Naive thymus-derived CD4-positive, alpha-beta T cell (primary cell): ENCODE measurements at regions of chr10 and their contacts with region 1.

Region 1: DNA sequence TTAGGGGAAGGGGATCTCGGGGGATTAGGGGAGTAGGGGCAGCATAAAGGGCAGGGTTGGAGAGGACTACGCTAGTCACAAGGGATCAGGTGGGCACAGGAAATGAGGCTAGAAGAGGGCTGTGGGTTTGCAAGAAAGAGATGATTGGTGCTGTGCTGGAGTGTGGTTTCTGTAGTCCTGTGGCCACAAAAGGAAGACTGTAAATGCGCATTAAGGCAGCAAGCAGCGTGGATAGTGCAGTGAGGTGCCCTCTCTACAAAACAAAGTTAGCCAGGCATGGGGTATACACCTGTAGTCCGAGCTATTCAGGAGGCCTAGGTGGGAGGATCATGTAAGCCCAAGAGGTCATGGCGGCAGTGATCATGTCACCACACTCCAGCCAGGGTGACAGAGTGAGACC is 212.1 kb downstream of the MLLT10 start:
- DNase-seq: peak in 3 of 9 donors; percentile 19 to 37 (median 36)
- ATAC-seq: peak; percentile 72
- H3K4me3 ChIP-seq: no peak overlapping the region
- H3K4me3 Mint-ChIP-seq: peak overlapping the region in 9 of 10 donors; percentile 23 to 70 (median 53)
- H3K27ac ChIP-seq: peak overlapping the region; percentile 18
- H3K27ac Mint-ChIP-seq: peak overlapping the region; percentile 73 to 95 (median 90)
- H3K4me1 ChIP-seq: peaks cover 7 to 19% of the 10 kb centered on the region in 2 donors
- H3K4me1 Mint-ChIP-seq: peaks cover 8 to 44% (median 28%) of the 10 kb centered on the region in 7 donors
- H3K27me3 ChIP-seq: no peaks in the 10 kb centered on the region
- H3K27me3 Mint-ChIP-seq: no peaks in the 10 kb centered on the region

Region 2: DNA sequence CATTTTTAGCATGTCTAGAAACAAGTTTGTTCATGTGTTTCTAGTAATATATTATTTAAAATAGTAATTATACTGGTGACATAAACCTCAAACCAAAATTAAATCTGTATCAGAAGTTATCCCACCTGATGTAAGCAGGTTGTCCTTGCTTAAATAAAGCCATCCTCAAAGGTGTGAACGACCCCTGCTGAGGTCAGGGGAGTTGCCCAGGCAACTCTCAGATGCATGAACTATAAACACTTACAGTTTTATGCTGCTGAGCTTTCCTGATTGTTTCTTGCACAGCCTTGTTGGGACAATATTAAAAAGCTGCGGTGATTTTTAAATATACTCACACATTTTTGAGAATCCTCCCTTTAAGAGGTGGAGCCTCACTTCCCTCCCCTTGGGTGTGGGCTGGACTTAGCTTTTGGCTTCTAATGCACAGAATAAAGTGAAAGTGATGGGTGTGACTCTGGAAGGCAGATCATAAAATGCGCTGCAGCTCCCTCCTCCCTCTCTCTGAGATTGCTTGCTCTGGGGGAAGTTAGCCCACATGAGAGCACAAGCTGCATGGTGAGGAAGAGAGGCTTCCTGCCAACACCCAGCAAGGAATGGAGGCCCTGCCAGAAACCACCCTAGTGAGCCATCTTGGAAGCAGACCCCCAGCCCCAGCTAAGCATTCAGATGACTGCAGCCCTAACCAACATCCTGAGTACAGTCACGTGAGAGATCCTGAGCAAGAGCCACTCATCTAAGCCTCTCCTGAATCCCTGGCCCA is 373.3 kb before region 1 on chr10:
- CTCF ChIA-PET with region 1: no interaction called
- POLR2A ChIA-PET with region 1: no interaction called
- intact Hi-C with region 1: no loop called
- DNase-seq: peak in 7 of 9 donors; percentile 31 to 70 (median 60)
- ATAC-seq: peak; percentile 94
- H3K4me3 ChIP-seq: peak overlapping the region; percentile 22
- H3K4me3 Mint-ChIP-seq: peak overlapping the region; percentile 46 to 78 (median 60)
- H3K27ac ChIP-seq: peak overlapping the region; percentile 9
- H3K27ac Mint-ChIP-seq: peak overlapping the region; percentile 44 to 93 (median 82)
- H3K4me1 ChIP-seq: peaks cover 0 to 3% of the 10 kb centered on the region in 2 donors
- H3K4me1 Mint-ChIP-seq: peaks cover 7 to 26% (median 14%) of the 10 kb centered on the region in 7 donors
- H3K27me3 ChIP-seq: no peaks in the 10 kb centered on the region
- H3K27me3 Mint-ChIP-seq: no peaks in the 10 kb centered on the region

Region 3: DNA sequence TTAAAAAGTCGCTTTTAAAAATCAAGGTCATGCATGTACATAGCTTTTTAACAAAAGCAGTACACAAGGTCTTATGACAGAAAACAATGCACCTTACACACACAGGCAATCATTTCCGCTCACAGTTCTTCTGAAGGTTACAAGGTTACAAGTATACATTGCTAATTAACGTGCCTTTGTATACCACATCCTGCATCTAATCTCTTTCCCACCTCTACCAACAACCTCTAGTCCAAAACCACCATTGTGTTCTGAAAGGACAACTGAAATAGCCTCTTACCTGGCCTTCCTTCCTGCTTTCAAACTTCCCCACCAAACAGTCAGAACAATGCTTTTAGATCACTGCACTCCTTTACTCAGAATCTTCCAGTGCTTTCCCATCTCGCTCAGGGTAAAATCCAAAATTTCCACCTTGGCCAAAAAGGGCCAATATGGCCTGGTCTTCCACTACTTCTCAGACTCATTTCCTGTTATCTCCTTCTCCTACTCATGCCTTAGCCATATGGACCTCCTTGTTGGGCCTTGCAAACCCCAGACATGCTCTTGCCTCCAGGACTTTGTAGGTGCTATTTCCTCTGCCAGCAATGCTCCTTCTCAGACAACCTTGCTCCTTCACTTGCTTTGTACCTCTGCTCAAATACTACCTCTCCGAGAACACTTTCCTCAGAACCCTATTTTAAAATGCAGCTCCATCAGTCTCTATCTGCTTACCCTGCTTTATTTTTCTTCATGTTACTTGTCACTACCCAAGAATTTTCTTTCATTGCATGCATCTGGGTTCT is 52.1 kb after region 1 on chr10:
- CTCF ChIA-PET with region 1: interaction called, 3 read pairs
- POLR2A ChIA-PET with region 1: no interaction called
- intact Hi-C with region 1: loop called in 1 of 2 experiments (anchors 10 kb)
- DNase-seq: peak in 6 of 9 donors; percentile 23 to 67 (median 54)
- ATAC-seq: peak; percentile 84
- H3K4me3 ChIP-seq: no peak overlapping the region
- H3K4me3 Mint-ChIP-seq: peak overlapping the region in 8 of 10 donors; percentile 18 to 82 (median 44)
- H3K27ac ChIP-seq: peak overlapping the region; percentile 33
- H3K27ac Mint-ChIP-seq: peak overlapping the region; percentile 58 to 95 (median 89)
- H3K4me1 ChIP-seq: peaks cover 8 to 23% of the 10 kb centered on the region in 2 donors
- H3K4me1 Mint-ChIP-seq: peaks cover 14 to 37% (median 35%) of the 10 kb centered on the region in 7 donors
- H3K27me3 ChIP-seq: no peaks in the 10 kb centered on the region
- H3K27me3 Mint-ChIP-seq: no peaks in the 10 kb centered on the region

Region 4: DNA sequence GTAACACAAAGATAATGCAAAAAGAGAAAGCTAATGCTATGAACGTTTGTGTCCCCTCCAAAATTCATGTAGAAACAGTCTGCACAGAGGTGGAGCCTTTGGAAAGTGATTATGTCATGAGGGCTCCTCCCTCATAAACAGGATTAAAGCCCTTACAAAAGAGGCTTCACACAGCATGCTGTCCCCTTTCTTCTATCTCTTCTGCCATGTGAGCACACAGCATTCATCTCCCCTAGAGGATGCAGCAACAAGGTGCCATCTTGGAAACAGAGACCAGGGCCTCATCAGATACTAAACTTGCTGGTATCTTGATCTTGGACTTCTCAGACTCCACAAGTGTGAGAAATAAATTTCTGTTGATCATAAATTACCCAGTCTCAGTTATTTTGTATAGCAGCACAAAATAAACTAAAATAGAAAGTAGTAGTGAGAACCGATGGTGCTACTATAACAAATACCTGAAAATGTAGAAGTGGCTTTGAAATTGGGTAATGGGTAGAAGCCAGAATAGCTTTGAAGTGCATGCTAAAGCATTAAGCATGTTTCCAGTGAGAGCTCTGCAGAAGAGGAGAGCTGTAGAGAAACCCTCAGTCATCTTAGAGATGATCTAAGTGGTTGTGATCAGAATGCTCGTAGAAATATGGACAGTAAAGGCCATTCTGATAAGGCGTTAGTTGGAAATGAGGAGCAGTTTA is 148.7 kb after region 1 on chr10:
- CTCF ChIA-PET with region 1: no interaction called
- POLR2A ChIA-PET with region 1: no interaction called
- intact Hi-C with region 1: no loop called
- DNase-seq: no peak
- ATAC-seq: no peak
- H3K4me3 ChIP-seq: no peak overlapping the region
- H3K4me3 Mint-ChIP-seq: no peak overlapping the region
- H3K27ac ChIP-seq: no peak overlapping the region
- H3K27ac Mint-ChIP-seq: peak overlapping the region in 1 of 9 donors; percentile 56
- H3K4me1 ChIP-seq: peaks cover 0 to 14% of the 10 kb centered on the region in 2 donors
- H3K4me1 Mint-ChIP-seq: peaks cover 0 to 28% (median 15%) of the 10 kb centered on the region in 7 donors
- H3K27me3 ChIP-seq: no peaks in the 10 kb centered on the region
- H3K27me3 Mint-ChIP-seq: no peaks in the 10 kb centered on the region